ENCODE measurements at regions of chr1 and their contacts with region 1.

Region 1: DNA sequence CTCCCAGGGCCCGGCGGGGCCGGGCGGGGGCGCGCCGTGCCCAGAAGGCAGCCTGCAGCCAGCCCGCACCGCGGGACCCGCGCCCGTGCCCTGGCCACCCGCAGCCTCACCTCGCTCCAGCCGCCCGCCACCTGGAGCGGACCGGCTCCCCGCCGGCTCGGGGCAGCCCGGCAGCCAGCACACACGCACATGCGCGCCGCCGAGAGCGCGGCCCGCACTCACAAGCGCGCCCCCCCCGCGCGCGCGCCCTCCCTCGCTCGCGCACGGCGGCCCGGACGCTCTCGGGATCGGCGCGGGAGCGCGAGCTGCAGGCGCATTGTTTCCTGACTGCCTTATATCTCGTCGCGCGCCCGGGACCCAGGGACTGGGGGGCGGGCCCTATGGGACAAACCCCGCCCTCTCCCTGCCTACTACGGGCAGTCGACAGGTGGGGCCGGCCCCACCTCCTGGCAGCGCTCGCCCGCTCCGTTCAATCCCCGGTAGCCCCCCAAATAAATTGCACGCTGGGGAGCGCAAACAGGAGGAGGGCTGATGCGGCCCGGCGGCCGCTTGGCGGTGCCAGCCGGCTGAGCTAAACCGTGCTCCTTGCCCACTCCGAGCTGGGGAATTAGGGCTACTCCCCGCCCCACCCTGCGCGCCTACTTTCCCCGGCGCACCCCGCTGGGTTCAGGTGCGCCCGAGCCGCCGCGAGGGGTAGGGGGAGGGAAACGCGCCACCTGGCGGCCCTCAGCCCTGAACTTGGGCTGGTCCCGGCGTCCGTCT is at the start of gene MYCL:
- DNase-seq: peak; percentile 91 to 97 (median 92)
- ATAC-seq: peak; percentile 84 to 92 (median 88)
- H3K4me3 ChIP-seq: peak within 1 kb of the TSS; percentile 60 to 78 (median 76)
- H3K27ac ChIP-seq: peak within 1 kb of the TSS; percentile 23 to 75 (median 64)
- H3K4me1 ChIP-seq: peaks cover 0 to 14% (median 0%) of the 10 kb centered on the region in 3 donors
- H3K27me3 ChIP-seq: no peaks in the 10 kb centered on the region
- CTCF ChIP-seq: peak; percentile 59 to 75 (median 68)
- total RNA-seq, gene MYCL: 3.4 to 17.9 (median 7.2) TPM

Region 2: GRCh38 chr1:39816415-39817090 is 85.3 kb before region 1 on chr1:
- intact Hi-C with region 1: loop called (anchors 5 to 10 kb)
- DNase-seq: peak in 5 of 6 donors; percentile 37 to 90 (median 75)
- ATAC-seq: peak; percentile 87 to 96 (median 92)
- H3K4me3 ChIP-seq: no peak overlapping the region
- H3K27ac ChIP-seq: no peak overlapping the region
- H3K4me1 ChIP-seq: no peaks in the 10 kb centered on the region
- H3K27me3 ChIP-seq: no peaks in the 10 kb centered on the region
- CTCF ChIP-seq: peak; percentile 68 to 82 (median 74)

Region 3: GRCh38 chr1:39973503-39974135 is 71.7 kb after region 1 on chr1:
- intact Hi-C with region 1: no loop called
- DNase-seq: peak; percentile 53 to 90 (median 77)
- ATAC-seq: peak; percentile 80 to 94 (median 88)
- H3K4me3 ChIP-seq: no peak overlapping the region
- H3K27ac ChIP-seq: no peak overlapping the region
- H3K4me1 ChIP-seq: peaks cover 0 to 7% (median 0%) of the 10 kb centered on the region in 3 donors
- H3K27me3 ChIP-seq: no peaks in the 10 kb centered on the region
- CTCF ChIP-seq: peak; percentile 90 to 92 (median 91)

Region 4: DNA sequence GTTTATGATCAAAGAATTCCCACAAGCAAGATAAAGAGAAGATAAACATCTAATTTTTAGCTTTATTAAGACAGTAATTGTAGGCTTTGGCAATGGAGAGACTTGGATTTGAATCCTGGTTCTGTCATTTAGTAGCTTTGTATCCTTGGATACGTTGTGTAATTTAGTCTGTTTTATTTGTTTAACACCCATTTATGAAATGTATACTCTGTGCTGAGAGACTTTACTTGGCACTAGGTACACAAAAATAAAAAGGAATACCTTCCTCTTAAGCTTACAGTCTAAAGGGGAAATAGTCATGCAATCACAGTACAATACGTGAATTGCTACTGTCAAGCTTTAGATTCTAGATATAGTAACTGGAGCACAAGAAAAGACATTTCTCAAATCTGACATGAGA is 380.0 kb after region 1 on chr1:
- intact Hi-C with region 1: no loop called
- DNase-seq: no peak
- ATAC-seq: peak in 1 of 4 donors; percentile 14
- H3K4me3 ChIP-seq: no peak overlapping the region
- H3K27ac ChIP-seq: no peak overlapping the region
- H3K4me1 ChIP-seq: no peaks in the 10 kb centered on the region
- H3K27me3 ChIP-seq: no peaks in the 10 kb centered on the region
- CTCF ChIP-seq: no peak

Measured in pancreas (tissue), 10 donors.